ENCODE measurements at regions of chr5 and their contacts with region 1.

Region 1: GRCh38 chr5:134041570-134042411 is 37.0 kb upstream of the VDAC1 start:
- DNase-seq: peak; percentile 74
- ATAC-seq: peak; percentile 88
- H3K4me3 ChIP-seq: no peak overlapping the region
- H3K27ac ChIP-seq: peak overlapping the region; percentile 33; the same call in 1 of the 2 replicates
- H3K4me1 ChIP-seq: peaks cover 24% of the 10 kb centered on the region
- H3K27me3 ChIP-seq: no peaks in the 10 kb centered on the region
- CTCF ChIP-seq: no peak
- EP300 ChIP-seq: peak; percentile 73 to 90
- POLR2A ChIP-seq: no peak
- RAD21 ChIP-seq: 0 out of 2 replicates have a peak, but pooled peaks have one; percentile 6

Region 2: DNA sequence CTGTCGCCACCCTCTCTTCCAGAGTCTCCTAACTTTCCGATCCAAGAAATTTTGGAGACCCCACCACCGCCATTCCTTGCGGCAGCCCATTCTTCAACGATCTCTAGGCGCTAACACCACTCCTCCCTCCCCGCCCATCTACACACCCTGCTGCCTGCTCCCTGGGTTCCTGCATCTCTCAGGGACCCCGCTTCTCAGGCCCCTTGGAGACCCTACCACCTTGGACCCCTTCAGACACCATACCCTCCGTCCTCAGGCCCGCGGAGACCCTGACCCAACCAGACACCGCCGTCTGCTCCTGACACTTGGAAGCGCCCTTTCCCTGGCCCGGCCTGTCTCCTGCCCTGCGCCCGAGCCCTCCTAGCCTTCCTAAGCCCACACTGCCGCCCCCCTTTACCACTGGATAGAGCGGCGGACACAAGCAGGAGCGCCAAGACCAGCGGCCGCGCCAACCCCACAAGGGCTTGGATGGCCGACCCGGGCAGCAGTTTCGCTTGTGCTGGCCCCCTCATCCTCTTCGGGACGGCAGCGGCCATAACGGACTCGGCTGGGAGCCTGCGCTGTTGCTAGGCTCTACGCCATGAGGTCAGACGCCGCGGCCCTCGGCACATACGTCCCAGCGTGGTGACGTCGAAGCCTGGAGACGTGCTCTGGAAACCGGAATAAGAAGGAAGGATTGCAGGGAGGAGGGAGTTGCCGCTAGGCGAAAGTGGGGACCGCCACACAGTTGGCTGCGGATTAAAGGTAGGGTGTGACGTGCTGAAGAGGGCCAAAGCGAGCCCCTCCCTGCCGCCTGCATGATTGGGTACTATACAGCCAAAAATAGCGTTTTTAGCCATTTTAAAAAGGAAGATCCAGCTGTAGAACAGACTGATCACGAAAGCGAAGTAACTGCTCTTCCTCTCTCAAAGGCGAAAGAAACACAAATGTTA is 73.5 kb before region 1 on chr5 and contains the start of gene C5orf15:
- CTCF ChIA-PET with region 1: interaction called, 11 read pairs
- POLR2A ChIA-PET with region 1: no interaction called
- RAD21 ChIA-PET with region 1: interaction called, 4 read pairs
- SMC1A ChIA-PET with region 1: no interaction called
- in situ Hi-C with region 1: no loop called
- intact Hi-C with region 1: no loop called
- DNase-seq: peak; percentile 94
- ATAC-seq: peak; percentile 94
- H3K4me3 ChIP-seq: peak within 1 kb of the TSS; percentile 98
- H3K27ac ChIP-seq: peak within 1 kb of the TSS; percentile 73
- H3K4me1 ChIP-seq: no peaks in the 10 kb centered on the region
- H3K27me3 ChIP-seq: no peaks in the 10 kb centered on the region
- CTCF ChIP-seq: 0 out of 6 replicates have a peak, but pooled peaks of 1 of the 3 experiments have one; percentile 2
- EP300 ChIP-seq: 0 out of 4 replicates have a peak, but pooled peaks of 1 of the 2 experiments have one; percentile 13
- POLR2A ChIP-seq: peak; percentile 98
- RAD21 ChIP-seq: no peak
- polyA plus RNA-seq, gene C5orf15: 36.3 to 42.2 TPM

Region 3: GRCh38 chr5:134026521-134027268 is 15.1 kb before region 1 on chr5:
- CTCF ChIA-PET with region 1: interaction called, 43 read pairs
- POLR2A ChIA-PET with region 1: interaction called, 3 read pairs
- RAD21 ChIA-PET with region 1: interaction called, 16 read pairs
- SMC1A ChIA-PET with region 1: interaction called, 16 read pairs
- in situ Hi-C with region 1: no loop called
- intact Hi-C with region 1: no loop called
- DNase-seq: no peak
- ATAC-seq: peak; percentile 95
- H3K4me3 ChIP-seq: no peak overlapping the region
- H3K27ac ChIP-seq: no peak overlapping the region
- H3K4me1 ChIP-seq: peaks cover 17% of the 10 kb centered on the region
- H3K27me3 ChIP-seq: no peaks in the 10 kb centered on the region; a peak in 2 of 4 replicates
- CTCF ChIP-seq: peak; percentile 76 to 79 (median 78)
- EP300 ChIP-seq: no peak
- POLR2A ChIP-seq: no peak
- RAD21 ChIP-seq: peak; percentile 72

Region 4: GRCh38 chr5:134070725-134071613 is 29.2 kb after region 1 on chr5:
- CTCF ChIA-PET with region 1: interaction called, 70 read pairs
- POLR2A ChIA-PET with region 1: interaction called, 8 read pairs
- RAD21 ChIA-PET with region 1: interaction called, 31 read pairs
- SMC1A ChIA-PET with region 1: interaction called, 79 read pairs
- in situ Hi-C with region 1: no loop called
- intact Hi-C with region 1: loop called (anchors 1 kb)
- DNase-seq: peak; percentile 69
- ATAC-seq: peak; percentile 72
- H3K4me3 ChIP-seq: peak overlapping the region; percentile 69
- H3K27ac ChIP-seq: peak overlapping the region; percentile 66
- H3K4me1 ChIP-seq: peaks cover 33% of the 10 kb centered on the region
- H3K27me3 ChIP-seq: no peaks in the 10 kb centered on the region
- CTCF ChIP-seq: peak; percentile 5 to 27 (median 14); a peak in 3 of 6 replicates
- EP300 ChIP-seq: no peak
- POLR2A ChIP-seq: peak; percentile 60
- RAD21 ChIP-seq: no peak

Region 5: GRCh38 chr5:134113902-134114875 is 72.4 kb after region 1 on chr5 and contains the start of gene TCF7:
- CTCF ChIA-PET with region 1: interaction called, 30 read pairs
- POLR2A ChIA-PET with region 1: interaction called, 3 read pairs
- RAD21 ChIA-PET with region 1: interaction called, 27 read pairs
- SMC1A ChIA-PET with region 1: interaction called, 37 read pairs
- in situ Hi-C with region 1: no loop called
- intact Hi-C with region 1: no loop called
- DNase-seq: no peak
- ATAC-seq: peak; percentile 82
- H3K4me3 ChIP-seq: peak within 1 kb of the TSS; percentile 83
- H3K27ac ChIP-seq: peak within 1 kb of the TSS; percentile 56
- H3K4me1 ChIP-seq: peaks cover 40% of the 10 kb centered on the region
- H3K27me3 ChIP-seq: no peaks in the 10 kb centered on the region; a peak in 1 of 4 replicates
- CTCF ChIP-seq: no peak
- EP300 ChIP-seq: no peak
- POLR2A ChIP-seq: peak; percentile 72
- RAD21 ChIP-seq: no peak
- polyA plus RNA-seq, gene TCF7: 10.0 to 13.2 TPM

Region 6: DNA sequence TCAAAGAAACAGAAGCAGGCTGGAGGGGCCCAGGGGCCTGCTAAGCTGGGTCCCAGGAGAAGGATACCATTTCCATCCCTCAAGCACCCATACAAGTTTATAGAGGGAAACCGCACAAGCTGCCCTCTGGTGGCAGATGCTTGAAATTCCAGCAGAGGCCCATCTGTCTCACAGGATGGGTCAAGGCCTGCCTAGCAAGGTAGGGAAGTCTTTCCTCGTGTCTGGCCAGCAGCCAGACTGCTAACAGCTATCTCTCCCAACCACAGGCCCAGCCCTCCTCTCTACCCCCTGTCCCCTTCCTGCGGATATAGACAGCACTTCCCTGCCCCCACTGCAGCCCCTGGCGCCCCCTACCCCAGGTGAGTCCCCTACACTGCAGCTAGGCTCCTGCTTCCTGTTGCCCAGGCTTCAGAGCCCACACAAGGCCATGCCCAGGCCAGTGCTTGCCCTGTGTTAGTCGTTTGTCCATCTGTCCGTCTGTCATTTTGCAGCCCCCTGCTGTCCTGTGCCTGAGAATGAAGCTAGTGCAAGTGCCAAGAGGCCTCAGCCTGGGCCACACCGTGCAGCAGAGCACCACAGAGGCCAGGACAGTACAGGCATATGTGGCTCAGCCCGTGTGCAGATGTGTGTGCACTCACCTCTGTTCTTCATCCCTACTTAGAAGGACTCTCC is 98.9 kb after region 1 on chr5:
- CTCF ChIA-PET with region 1: interaction called, 792 read pairs
- POLR2A ChIA-PET with region 1: interaction called, 18 read pairs
- RAD21 ChIA-PET with region 1: interaction called, 200 read pairs
- SMC1A ChIA-PET with region 1: interaction called, 441 read pairs
- in situ Hi-C with region 1: loop called (anchors 5 kb)
- intact Hi-C with region 1: loop called (anchors 1 kb)
- DNase-seq: no peak
- ATAC-seq: peak; percentile 68
- H3K4me3 ChIP-seq: no peak overlapping the region
- H3K27ac ChIP-seq: peak overlapping the region; percentile 90
- H3K4me1 ChIP-seq: peaks cover 50% of the 10 kb centered on the region
- H3K27me3 ChIP-seq: no peaks in the 10 kb centered on the region
- CTCF ChIP-seq: peak; percentile 78 to 83 (median 80)
- EP300 ChIP-seq: no peak
- POLR2A ChIP-seq: peak; percentile 41; the same call in 1 of the 2 replicates
- RAD21 ChIP-seq: peak; percentile 82

Region 7: GRCh38 chr5:134176511-134177368 is 134.9 kb after region 1 on chr5 and contains the start of gene SKP1:
- CTCF ChIA-PET with region 1: interaction called, 7 read pairs
- POLR2A ChIA-PET with region 1: no interaction called
- RAD21 ChIA-PET with region 1: interaction called, 15 read pairs
- SMC1A ChIA-PET with region 1: interaction called, 5 read pairs
- in situ Hi-C with region 1: no loop called
- intact Hi-C with region 1: no loop called
- DNase-seq: peak; percentile 42
- ATAC-seq: peak; percentile 89
- H3K4me3 ChIP-seq: peak within 1 kb of the TSS; percentile 99
- H3K27ac ChIP-seq: peak within 1 kb of the TSS; percentile 89
- H3K4me1 ChIP-seq: peaks cover 3% of the 10 kb centered on the region
- H3K27me3 ChIP-seq: no peaks in the 10 kb centered on the region
- CTCF ChIP-seq: no peak
- EP300 ChIP-seq: no peak
- POLR2A ChIP-seq: peak; percentile 100
- RAD21 ChIP-seq: no peak
- polyA plus RNA-seq, gene SKP1: 1,587 to 1,686 TPM

Measured in GM12878 (cell line).